ENCODE measurements at regions of chr7 and their contacts with region 1.

Region 1: GRCh38 chr7:37311355-37311754 is 137.3 kb downstream of the ELMO1 start:
- DNase-seq: no peak
- ATAC-seq: peak; percentile 74
- H3K4me3 Mint-ChIP-seq: no peak overlapping the region
- H3K27ac Mint-ChIP-seq: peak overlapping the region; percentile 77
- H3K4me1 Mint-ChIP-seq: peaks cover 73% of the 10 kb centered on the region
- H3K27me3 Mint-ChIP-seq: no peaks in the 10 kb centered on the region
- CTCF ChIP-seq: no peak

Region 2: GRCh38 chr7:37336259-37336658 is 24.9 kb after region 1 on chr7:
- CTCF ChIA-PET with region 1: interaction called, 3 read pairs
- POLR2A ChIA-PET with region 1: interaction called, 3 read pairs
- intact Hi-C with region 1: loop called (anchors 1 kb)
- DNase-seq: no peak
- ATAC-seq: peak; percentile 92
- H3K4me3 Mint-ChIP-seq: peak overlapping the region; percentile 77
- H3K27ac Mint-ChIP-seq: peak overlapping the region; percentile 95
- H3K4me1 Mint-ChIP-seq: peaks cover 83% of the 10 kb centered on the region
- H3K27me3 Mint-ChIP-seq: no peaks in the 10 kb centered on the region
- CTCF ChIP-seq: no peak

Region 3: DNA sequence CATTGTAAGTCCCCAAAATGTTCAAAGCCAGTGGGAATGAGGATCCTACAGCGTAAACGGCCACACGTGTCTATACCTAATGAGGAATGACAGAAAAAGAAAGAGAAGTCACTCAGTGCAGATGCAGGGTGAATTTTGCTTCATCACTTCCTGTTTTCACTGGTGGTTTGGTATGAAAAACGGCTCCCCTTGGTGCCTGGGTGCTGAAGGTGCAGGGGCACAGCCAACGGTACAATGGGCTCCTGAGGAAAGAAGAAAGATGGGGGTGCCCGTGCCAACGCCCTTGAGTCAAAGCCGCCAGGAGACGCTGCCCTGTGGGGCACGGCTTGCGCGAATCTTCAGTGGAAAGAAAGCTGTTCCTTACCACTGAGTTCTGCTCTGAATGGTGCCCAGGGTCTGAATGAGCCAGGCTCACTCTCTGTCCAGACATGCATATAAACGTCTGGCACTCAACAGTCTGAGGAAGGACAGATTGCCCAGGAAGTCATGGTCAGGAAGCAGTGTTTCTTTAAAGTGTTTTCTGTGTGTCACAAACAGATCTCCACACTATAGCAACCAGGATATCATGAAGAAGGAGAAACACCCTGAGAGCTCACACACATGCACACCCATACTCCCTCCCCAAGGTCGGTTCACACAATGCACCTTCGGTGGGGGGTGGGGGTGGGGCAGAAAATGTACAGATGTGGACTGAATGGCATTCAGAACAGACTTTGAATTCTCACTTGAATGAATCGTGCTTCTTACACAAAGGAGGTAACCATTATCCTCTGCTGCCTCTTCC is 31.5 kb after region 1 on chr7:
- CTCF ChIA-PET with region 1: interaction called, 3 read pairs
- POLR2A ChIA-PET with region 1: no interaction called
- intact Hi-C with region 1: loop called (anchors 1 kb)
- DNase-seq: peak; percentile 59
- ATAC-seq: peak; percentile 86
- H3K4me3 Mint-ChIP-seq: peak overlapping the region; percentile 98
- H3K27ac Mint-ChIP-seq: peak overlapping the region; percentile 98
- H3K4me1 Mint-ChIP-seq: peaks cover 85% of the 10 kb centered on the region
- H3K27me3 Mint-ChIP-seq: no peaks in the 10 kb centered on the region
- CTCF ChIP-seq: no peak

Measured in activated B cell treated with CpG ODN at 0.5 μM for 24 hours (primary cell).